RWPE1 (cell line): ENCODE measurements at regions of chr2 and their contacts with region 1.

Region 1: DNA sequence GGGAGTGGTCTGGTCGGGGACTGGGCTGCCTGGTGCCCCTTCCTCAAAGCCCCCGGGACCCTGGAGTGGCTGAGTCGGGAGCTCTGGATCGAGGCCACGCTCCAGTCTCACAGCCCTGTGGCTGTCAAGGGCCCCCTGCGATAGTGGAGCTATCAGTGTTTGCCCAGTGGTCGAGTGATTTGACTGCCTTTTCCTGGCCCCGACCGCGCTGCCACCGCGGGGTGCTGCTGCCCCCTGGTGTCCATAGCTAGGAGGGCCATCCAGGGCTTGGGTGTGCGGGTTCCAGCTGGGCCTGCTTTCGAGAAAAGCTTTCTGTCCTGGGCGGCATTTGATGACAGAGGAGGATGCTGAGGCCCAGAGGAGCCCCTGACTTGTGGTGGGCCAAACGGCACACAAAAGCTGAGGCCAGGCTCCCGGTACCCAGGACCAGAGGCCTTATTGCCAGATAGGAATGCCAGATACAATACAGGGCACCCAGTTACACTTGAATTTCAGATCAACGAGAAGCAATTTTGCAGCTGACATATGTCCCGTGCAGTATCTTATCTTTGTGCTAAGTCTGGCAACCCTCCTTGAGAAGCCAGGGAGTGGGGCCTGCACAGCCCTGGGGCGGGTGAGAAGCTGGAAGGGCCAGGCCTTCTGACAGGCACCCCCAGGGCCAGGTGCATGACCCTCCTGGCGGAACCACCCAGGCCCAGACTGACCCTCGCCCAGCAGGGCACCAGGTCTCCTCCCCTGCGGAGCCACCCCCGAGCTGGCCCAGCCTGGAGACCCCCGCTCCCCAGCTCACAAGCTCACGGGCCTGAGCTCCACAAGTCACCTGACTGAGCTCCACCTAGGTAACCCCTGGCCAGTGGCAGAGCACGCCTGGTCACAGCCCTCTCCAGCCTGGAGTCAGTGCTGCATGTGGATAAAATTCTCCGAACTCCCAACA is 13.0 kb downstream of the ODC1 start:
- DNase-seq: peak; percentile 82
- H3K27ac ChIP-seq: peak overlapping the region; percentile 21
- CTCF ChIP-seq: peak; percentile 91

Region 2: DNA sequence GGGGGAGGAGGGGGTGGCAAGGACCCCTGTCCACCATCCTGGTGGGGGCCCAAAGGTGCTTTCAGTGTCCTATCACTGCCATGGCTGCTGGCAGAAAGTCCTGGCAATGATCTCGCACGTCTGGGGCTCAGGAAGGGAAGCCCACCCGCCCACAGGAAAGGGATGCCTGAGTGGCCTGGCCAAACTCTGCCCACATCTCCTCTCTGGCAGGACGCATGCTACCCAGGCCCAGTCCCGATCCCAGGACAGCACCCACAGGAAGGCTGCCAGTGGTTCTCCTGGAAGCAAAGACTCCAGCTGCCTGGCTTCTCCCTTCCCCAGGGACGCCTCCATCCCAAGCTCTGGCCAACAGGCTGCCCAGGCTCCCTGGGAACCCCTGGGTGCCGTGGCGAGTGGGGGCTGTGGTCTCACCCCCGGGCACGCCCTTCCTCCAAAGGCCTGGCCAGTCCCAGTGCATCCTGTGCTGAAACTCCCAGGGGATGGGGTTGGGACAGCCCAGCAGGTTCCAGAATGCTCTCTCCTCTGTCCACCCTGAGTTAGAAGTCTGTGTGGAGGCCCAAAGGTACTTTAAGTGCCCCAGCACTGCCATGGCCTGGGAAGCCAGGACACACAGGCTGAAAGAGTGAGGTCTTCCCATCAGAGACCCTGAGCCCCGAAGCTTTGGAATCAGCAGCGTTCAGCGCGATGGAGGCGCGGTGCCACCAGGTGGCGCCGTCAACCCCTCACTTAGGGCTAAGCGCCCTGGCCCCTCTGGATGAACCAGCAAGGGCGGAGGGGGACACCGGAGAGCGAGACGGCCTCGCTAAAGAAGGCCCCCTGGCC is 621.6 kb before region 1 on chr2:
- CTCF ChIA-PET with region 1: interaction called, 11 read pairs
- POLR2A ChIA-PET with region 1: no interaction called
- DNase-seq: peak; percentile 68
- H3K27ac ChIP-seq: peak overlapping the region; percentile 36
- CTCF ChIP-seq: peak; percentile 92

Region 3: GRCh38 chr2:10122386-10123280 is 312.5 kb before region 1 on chr2 and contains the start of gene RRM2:
- CTCF ChIA-PET with region 1: interaction called, 22 read pairs
- POLR2A ChIA-PET with region 1: no interaction called
- DNase-seq: peak; percentile 98
- H3K27ac ChIP-seq: peak within 1 kb of the TSS; percentile 93
- CTCF ChIP-seq: no peak

Region 4: DNA sequence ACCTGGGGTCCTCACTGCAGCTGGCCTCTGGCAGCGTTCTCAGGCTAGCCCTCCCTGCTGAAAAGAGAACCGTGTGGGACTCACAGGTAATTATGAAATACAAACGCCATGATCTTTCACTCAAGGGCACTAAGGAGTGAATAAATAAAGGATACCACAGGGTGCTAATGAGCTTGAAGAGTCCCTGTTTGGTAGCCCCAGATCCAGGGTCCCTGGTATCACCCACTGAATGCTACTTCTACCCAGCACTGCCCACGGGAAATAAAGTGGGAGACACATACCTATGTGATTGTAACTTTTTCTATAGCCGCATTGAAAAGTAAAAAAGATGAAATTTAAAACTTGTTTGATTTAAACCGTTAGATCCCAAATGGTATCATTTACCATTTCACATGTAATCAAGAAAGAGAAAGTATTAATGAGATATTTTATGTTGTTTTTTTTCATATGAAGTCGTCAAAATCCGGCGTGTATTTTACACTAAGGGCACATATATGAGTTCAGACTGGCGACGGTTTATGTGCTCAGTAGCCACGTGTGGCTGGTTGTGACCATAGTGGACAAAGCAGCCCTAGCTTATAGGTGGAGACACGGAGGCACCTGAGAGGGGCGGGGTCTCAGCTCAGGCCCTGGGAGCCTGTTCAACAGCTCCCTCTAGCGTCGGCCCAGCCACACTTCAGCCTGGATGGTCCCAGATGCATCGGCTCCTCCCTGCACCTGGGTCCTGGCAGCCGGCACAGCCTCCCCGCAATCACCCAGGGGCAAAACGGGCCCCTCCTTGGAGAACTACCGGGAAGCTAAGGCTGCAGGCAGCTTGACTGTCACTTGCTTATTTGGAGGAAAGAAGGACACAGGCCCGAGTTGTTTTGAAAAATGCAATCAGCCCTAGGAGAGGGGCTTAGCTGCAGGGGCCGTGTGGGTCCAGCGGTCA is 26.2 kb before region 1 on chr2:
- CTCF ChIA-PET with region 1: interaction called, 11 read pairs
- POLR2A ChIA-PET with region 1: no interaction called
- DNase-seq: peak; percentile 91
- H3K27ac ChIP-seq: peak overlapping the region; percentile 98
- CTCF ChIP-seq: peak; percentile 97

Region 5: GRCh38 chr2:10448208-10448645 is 13.1 kb after region 1 on chr2 and contains the start of gene ODC1:
- CTCF ChIA-PET with region 1: interaction called, 19 read pairs
- POLR2A ChIA-PET with region 1: no interaction called
- DNase-seq: peak; percentile 90
- H3K27ac ChIP-seq: peak within 1 kb of the TSS; percentile 96
- CTCF ChIP-seq: no peak